ENCODE measurements at regions of chr3 and their contacts with region 1.

Region 1: GRCh38 chr3:156892701-156893100 is 66.5 kb downstream of the LEKR1 start:
- DNase-seq: peak; percentile 97
- ATAC-seq: peak; percentile 94
- H3K4me3 ChIP-seq: no peak overlapping the region
- H3K27ac ChIP-seq: peak overlapping the region; percentile 88
- H3K4me1 ChIP-seq: peaks cover 22% of the 10 kb centered on the region
- H3K27me3 ChIP-seq: no peaks in the 10 kb centered on the region
- CTCF ChIP-seq: no peak

Region 2: GRCh38 chr3:156620260-156620659 is 272.4 kb before region 1 on chr3:
- CTCF ChIA-PET with region 1: no interaction called
- POLR2A ChIA-PET with region 1: no interaction called
- intact Hi-C with region 1: no loop called
- DNase-seq: peak; percentile 23
- ATAC-seq: no peak
- H3K4me3 ChIP-seq: no peak overlapping the region
- H3K27ac ChIP-seq: no peak overlapping the region
- H3K4me1 ChIP-seq: peaks cover 13% of the 10 kb centered on the region
- H3K27me3 ChIP-seq: no peaks in the 10 kb centered on the region
- CTCF ChIP-seq: no peak

Region 3: DNA sequence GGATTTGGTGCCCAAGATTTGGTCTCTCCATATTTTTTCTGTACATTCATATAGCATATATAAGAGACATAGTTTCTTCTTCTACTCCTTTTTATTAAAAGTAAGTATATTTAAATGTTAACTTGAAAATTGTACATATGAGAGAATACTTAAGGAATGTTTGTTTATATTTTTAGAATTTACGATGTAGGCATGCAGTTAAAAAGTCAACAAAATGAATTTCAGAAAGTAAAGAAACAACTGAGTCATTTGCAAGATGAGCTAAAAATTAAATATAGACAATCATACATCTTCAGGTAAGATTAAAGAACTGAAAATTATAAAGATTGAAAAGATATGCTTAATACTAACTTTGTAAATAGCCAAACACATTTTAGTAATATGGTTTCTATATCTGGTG is 27.7 kb after region 1 on chr3:
- CTCF ChIA-PET with region 1: no interaction called
- POLR2A ChIA-PET with region 1: no interaction called
- intact Hi-C with region 1: loop called (anchors 2 kb)
- DNase-seq: peak; percentile 58
- ATAC-seq: peak; percentile 60
- H3K4me3 ChIP-seq: no peak overlapping the region; the same call in 1 of the 2 replicates
- H3K27ac ChIP-seq: peak overlapping the region; percentile 72
- H3K4me1 ChIP-seq: peaks cover 37% of the 10 kb centered on the region
- H3K27me3 ChIP-seq: no peaks in the 10 kb centered on the region
- CTCF ChIP-seq: no peak

Region 4: GRCh38 chr3:157064402-157064801 is 171.7 kb after region 1 on chr3:
- CTCF ChIA-PET with region 1: no interaction called
- POLR2A ChIA-PET with region 1: no interaction called
- intact Hi-C with region 1: loop called (anchors 5 kb)
- DNase-seq: no peak
- ATAC-seq: no peak
- H3K4me3 ChIP-seq: no peak overlapping the region
- H3K27ac ChIP-seq: no peak overlapping the region
- H3K4me1 ChIP-seq: peaks cover 11% of the 10 kb centered on the region
- H3K27me3 ChIP-seq: no peaks in the 10 kb centered on the region
- CTCF ChIP-seq: no peak

Region 5: GRCh38 chr3:157119369-157119951 is 226.8 kb after region 1 on chr3:
- CTCF ChIA-PET with region 1: no interaction called
- POLR2A ChIA-PET with region 1: no interaction called
- intact Hi-C with region 1: no loop called
- DNase-seq: peak; percentile 45
- ATAC-seq: peak; percentile 23
- H3K4me3 ChIP-seq: no peak overlapping the region
- H3K27ac ChIP-seq: peak overlapping the region; percentile 7; the same call in 1 of the 2 replicates
- H3K4me1 ChIP-seq: peaks cover 63% of the 10 kb centered on the region
- H3K27me3 ChIP-seq: no peaks in the 10 kb centered on the region
- CTCF ChIP-seq: no peak

Region 6: DNA sequence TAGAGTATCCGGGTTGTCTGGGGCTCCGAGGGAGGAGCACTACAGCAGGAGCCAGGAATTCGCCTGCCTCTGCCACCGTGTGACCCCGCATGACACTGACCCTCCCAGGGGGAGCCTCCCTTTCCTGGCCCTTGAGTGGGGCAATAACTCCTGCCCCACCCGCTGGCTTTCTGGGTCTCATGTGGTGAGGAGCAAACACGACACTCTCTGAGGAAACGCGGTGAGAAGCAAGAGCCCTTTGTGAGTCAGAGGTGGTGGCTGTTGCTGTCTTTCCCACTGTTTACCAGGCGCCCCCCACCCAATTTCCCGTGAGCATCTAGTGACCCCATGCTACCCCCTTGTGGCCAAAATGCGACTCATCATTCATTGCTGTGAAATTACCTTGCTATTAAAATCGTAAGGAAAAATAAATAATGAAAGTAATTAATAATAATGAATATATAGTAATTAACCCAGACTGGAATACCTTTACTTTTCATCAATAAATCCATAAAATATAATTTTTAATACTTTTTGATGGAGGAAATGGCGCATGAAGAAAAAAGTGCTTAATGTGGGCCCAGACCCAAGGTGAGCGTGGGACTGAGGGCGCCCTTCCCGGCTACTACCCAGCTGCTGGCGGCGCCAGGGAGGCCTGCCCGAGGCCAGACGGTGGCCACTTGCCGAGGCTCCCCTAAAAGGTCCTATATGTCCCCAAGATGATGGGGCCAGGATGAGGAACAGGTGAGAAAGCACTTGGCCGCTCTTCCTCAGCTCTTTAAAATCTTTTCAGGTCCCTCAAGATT is 238.0 kb after region 1 on chr3:
- CTCF ChIA-PET with region 1: no interaction called
- POLR2A ChIA-PET with region 1: no interaction called
- intact Hi-C with region 1: loop called (anchors 2 kb)
- DNase-seq: peak; percentile 95
- ATAC-seq: peak; percentile 49
- H3K4me3 ChIP-seq: peak overlapping the region; percentile 33; the same call in 1 of the 2 replicates
- H3K27ac ChIP-seq: peak overlapping the region; percentile 99
- H3K4me1 ChIP-seq: peaks cover 98% of the 10 kb centered on the region
- H3K27me3 ChIP-seq: no peaks in the 10 kb centered on the region
- CTCF ChIP-seq: peak; percentile 76

Region 7: GRCh38 chr3:157559401-157559800 is 666.7 kb after region 1 on chr3:
- CTCF ChIA-PET with region 1: no interaction called
- POLR2A ChIA-PET with region 1: no interaction called
- intact Hi-C with region 1: no loop called
- DNase-seq: no peak
- ATAC-seq: no peak
- H3K4me3 ChIP-seq: no peak overlapping the region
- H3K27ac ChIP-seq: no peak overlapping the region
- H3K4me1 ChIP-seq: no peaks in the 10 kb centered on the region
- H3K27me3 ChIP-seq: no peaks in the 10 kb centered on the region
- CTCF ChIP-seq: no peak